PC-3 (cell line): ENCODE measurements at regions of chr10 and their contacts with region 1.

Region 1: DNA sequence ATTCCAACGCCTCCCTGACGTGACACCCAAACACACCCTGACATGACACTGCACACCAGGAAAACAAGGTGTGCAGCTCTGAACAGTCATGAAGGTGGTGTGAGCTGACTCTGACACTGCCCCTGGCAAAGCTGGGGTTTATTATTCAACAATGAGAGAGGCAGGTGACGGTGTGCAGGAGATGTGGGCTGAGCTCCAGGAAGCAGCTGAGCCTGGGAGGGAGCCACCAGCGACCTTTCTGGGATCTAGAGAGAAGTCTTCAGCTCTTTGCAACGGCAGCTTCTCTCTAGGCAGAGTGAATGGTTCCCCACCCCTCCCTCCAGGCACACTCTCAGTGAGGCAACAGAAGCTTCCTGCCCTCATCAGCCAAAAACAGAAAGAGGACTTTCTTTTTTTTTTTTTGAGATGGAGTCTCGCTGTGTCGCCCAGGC is 65.6 kb downstream of the SH3PXD2A start:
- DNase-seq: peak; percentile 50
- ATAC-seq: peak; percentile 21
- H3K4me3 ChIP-seq: no peak overlapping the region
- H3K27ac ChIP-seq: no peak overlapping the region
- H3K4me1 ChIP-seq: peaks cover 43% of the 10 kb centered on the region
- H3K27me3 ChIP-seq: no peaks in the 10 kb centered on the region
- CTCF ChIP-seq: no peak

Region 2: DNA sequence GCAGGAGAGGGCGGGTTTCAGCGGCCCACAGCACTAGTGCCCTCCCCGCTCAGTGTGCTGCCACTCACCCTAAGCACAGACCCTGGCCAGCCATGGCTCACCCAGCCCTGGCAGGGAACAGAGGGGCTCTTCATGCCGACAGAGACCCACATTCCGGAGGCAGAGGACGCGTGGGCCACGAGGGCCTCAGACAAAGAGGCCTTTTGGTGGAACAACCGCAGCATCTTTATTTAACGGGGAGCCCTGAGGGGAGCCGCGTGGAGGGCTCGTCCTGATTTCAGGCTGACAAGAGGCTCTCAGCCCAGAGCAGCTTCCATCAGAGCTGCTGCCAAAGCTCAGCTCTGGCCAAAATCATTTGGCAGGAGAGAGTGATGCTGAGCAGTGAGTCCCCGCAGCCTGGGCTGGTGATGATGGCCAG is 62.2 kb before region 1 on chr10:
- CTCF ChIA-PET with region 1: no interaction called
- POLR2A ChIA-PET with region 1: no interaction called
- intact Hi-C with region 1: no loop called
- DNase-seq: no peak
- ATAC-seq: no peak
- H3K4me3 ChIP-seq: no peak overlapping the region
- H3K27ac ChIP-seq: no peak overlapping the region
- H3K4me1 ChIP-seq: peaks cover 12% of the 10 kb centered on the region
- H3K27me3 ChIP-seq: no peaks in the 10 kb centered on the region
- CTCF ChIP-seq: no peak

Region 3: GRCh38 chr10:103759100-103759781 is 30.5 kb before region 1 on chr10:
- CTCF ChIA-PET with region 1: no interaction called
- POLR2A ChIA-PET with region 1: no interaction called
- intact Hi-C with region 1: loop called (anchors 5 kb)
- DNase-seq: peak; percentile 52
- ATAC-seq: peak; percentile 14
- H3K4me3 ChIP-seq: peak overlapping the region; percentile 7; the same call in 1 of the 2 replicates
- H3K27ac ChIP-seq: peak overlapping the region; percentile 94
- H3K4me1 ChIP-seq: peaks cover 60% of the 10 kb centered on the region
- H3K27me3 ChIP-seq: no peaks in the 10 kb centered on the region
- CTCF ChIP-seq: no peak